HepG2 (cell line): ENCODE measurements at regions of chr1 and their contacts with region 1.

Region 1: DNA sequence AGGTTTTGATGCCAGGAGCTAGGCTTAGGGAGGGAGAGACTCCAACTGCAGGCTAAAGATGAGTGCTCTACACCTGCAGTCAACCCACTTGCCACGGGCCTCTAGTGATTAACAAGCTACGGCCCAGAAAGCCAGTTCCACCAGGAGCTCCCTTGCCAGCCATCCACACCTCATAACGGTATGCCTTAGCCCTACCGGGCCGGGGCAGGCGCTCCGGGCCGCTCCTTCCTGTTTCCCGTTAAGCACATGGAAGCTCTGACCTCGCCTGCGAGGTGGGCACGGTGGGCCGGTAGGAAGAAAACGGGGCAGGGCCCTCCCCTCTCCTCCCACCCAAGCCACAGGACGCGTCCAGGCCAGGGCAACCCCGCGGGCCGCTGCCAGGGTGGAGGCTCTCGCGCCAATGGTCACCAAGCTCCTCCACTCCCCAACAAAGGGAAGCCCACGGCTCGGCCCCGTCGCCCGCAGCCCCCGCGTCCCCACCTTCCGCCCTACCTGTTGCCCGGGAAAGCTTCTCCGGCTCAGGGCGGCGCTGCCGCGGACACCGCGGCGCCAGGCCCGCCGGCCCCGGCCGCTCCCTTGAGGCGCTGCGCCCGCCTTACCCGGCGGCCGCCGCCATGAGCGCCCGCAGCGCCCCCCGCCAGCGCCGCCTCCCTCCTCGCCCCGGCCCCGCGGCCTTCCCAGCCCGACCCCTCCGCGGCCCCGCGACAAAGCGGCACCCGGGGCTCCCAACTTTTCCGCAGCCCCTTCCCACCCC is 632 bp downstream of the CERS2 start:
- DNase-seq: no peak
- ATAC-seq: no peak
- H3K4me3 ChIP-seq: peak overlapping the region; percentile 71 to 95 (median 89)
- H3K27ac ChIP-seq: peak overlapping the region; percentile 96
- H3K4me1 ChIP-seq: peaks cover 79% of the 10 kb centered on the region
- H3K27me3 ChIP-seq: no peaks in the 10 kb centered on the region; a peak in 1 of 5 replicates
- CTCF ChIP-seq: no peak
- EP300 ChIP-seq: no peak
- POLR2A ChIP-seq: no peak
- RAD21 ChIP-seq: no peak

Region 2: GRCh38 chr1:150925816-150926741 is 47.9 kb before region 1 on chr1 and contains the start of gene SETDB1:
- CTCF ChIA-PET with region 1: interaction called, 3 read pairs
- POLR2A ChIA-PET with region 1: interaction called, 15 read pairs
- in situ Hi-C with region 1: no loop called
- intact Hi-C with region 1: no loop called
- DNase-seq: peak; percentile 97
- ATAC-seq: peak; percentile 98
- H3K4me3 ChIP-seq: peak within 1 kb of the TSS; percentile 81 to 96 (median 82)
- H3K27ac ChIP-seq: peak within 1 kb of the TSS; percentile 95
- H3K4me1 ChIP-seq: peaks cover 15% of the 10 kb centered on the region
- H3K27me3 ChIP-seq: no peaks in the 10 kb centered on the region
- CTCF ChIP-seq: peak; percentile 68
- EP300 ChIP-seq: peak in 1 of 2 experiments; percentile 44; a peak in 1 of 4 replicates
- POLR2A ChIP-seq: peak; percentile 47 to 70; a peak in 3 of 4 replicates
- RAD21 ChIP-seq: no peak
- total RNA-seq, gene SETDB1: 31.0 and 34.6 TPM in 2 replicates

Region 3: DNA sequence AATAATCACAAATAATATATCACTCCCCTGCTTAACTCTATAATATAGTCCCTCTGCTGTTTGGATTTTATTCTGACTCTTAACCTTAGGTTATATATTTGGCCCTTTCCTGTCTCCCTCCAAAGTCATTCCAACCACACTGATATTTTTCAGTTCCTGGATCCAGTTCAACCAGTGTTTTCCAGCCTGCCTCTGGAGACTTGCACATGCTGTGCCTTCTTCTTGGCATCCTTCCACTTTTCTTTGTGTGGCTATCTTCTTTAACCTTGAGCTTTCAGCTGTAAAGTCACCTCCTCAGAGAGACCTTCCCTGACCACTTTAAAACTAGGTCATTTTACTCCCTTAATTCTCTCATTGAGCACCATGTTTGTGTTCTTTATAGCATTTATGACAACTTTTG is 18.7 kb before region 1 on chr1:
- CTCF ChIA-PET with region 1: interaction called, 7 read pairs
- POLR2A ChIA-PET with region 1: interaction called, 21 read pairs
- in situ Hi-C with region 1: no loop called
- intact Hi-C with region 1: no loop called
- DNase-seq: no peak
- ATAC-seq: no peak
- H3K4me3 ChIP-seq: no peak overlapping the region
- H3K27ac ChIP-seq: no peak overlapping the region
- H3K4me1 ChIP-seq: no peaks in the 10 kb centered on the region
- H3K27me3 ChIP-seq: no peaks in the 10 kb centered on the region
- CTCF ChIP-seq: no peak
- EP300 ChIP-seq: no peak
- POLR2A ChIP-seq: no peak
- RAD21 ChIP-seq: no peak

Region 4: GRCh38 chr1:150961799-150962198 is 12.2 kb before region 1 on chr1:
- CTCF ChIA-PET with region 1: interaction called, 5 read pairs
- POLR2A ChIA-PET with region 1: interaction called, 21 read pairs
- in situ Hi-C with region 1: no loop called
- intact Hi-C with region 1: no loop called
- DNase-seq: no peak
- ATAC-seq: peak; percentile 53
- H3K4me3 ChIP-seq: no peak overlapping the region
- H3K27ac ChIP-seq: no peak overlapping the region
- H3K4me1 ChIP-seq: peaks cover 12% of the 10 kb centered on the region; the same call in 1 of the 2 replicates
- H3K27me3 ChIP-seq: no peaks in the 10 kb centered on the region
- CTCF ChIP-seq: no peak
- EP300 ChIP-seq: no peak
- POLR2A ChIP-seq: no peak
- RAD21 ChIP-seq: no peak